ENCODE measurements at regions of chr10 and their contacts with region 1.

Region 1: GRCh38 chr10:71608819-71609768 is 110.5 kb downstream of the C10orf105 start:
- DNase-seq: peak; percentile 82
- ATAC-seq: peak in 6 of 8 donors; percentile 19 to 61 (median 51)
- H3K4me3 ChIP-seq: no peak overlapping the region
- H3K27ac ChIP-seq: no peak overlapping the region
- H3K4me1 ChIP-seq: peaks cover 8 to 26% (median 16%) of the 10 kb centered on the region in 9 donors
- H3K27me3 ChIP-seq: no peaks in the 10 kb centered on the region
- CTCF ChIP-seq: peak; percentile 69 to 83 (median 82)

Region 2: GRCh38 chr10:71581376-71581775 is 27.7 kb before region 1 on chr10:
- intact Hi-C with region 1: loop called in 1 of 10 experiments (anchors 2 kb)
- DNase-seq: no peak
- ATAC-seq: peak in 1 of 8 donors; percentile 5
- H3K4me3 ChIP-seq: no peak overlapping the region
- H3K27ac ChIP-seq: no peak overlapping the region
- H3K4me1 ChIP-seq: no peaks in the 10 kb centered on the region
- H3K27me3 ChIP-seq: peaks cover 0 to 8% (median 0%) of the 10 kb centered on the region in 7 donors
- CTCF ChIP-seq: no peak